A549 (cell line): ENCODE measurements at regions of chr2 and their contacts with region 1.

Region 1: GRCh38 chr2:84970868-84971509 is at the start of gene KCMF1:
- DNase-seq: peak in 1 of 2 experiments; percentile 89
- ATAC-seq: peak; percentile 75 to 77
- H3K4me3 ChIP-seq: peak within 1 kb of the TSS; percentile 89
- H3K27ac ChIP-seq: peak within 1 kb of the TSS; percentile 97 to 98
- H3K4me1 ChIP-seq: peaks cover 42% of the 10 kb centered on the region
- CTCF ChIP-seq: no peak
- EP300 ChIP-seq: no peak
- POLR2A ChIP-seq: peak; percentile 40
- RAD21 ChIP-seq: no peak
- polyA plus RNA-seq, gene KCMF1: 194 and 221 TPM in 2 replicates

Region 2: GRCh38 chr2:84905181-84906107 is 65.5 kb before region 1 on chr2 and contains the start of gene TMSB10:
- CTCF ChIA-PET with region 1: no interaction called
- POLR2A ChIA-PET with region 1: interaction called, 16 read pairs
- DNase-seq: peak; percentile 82 to 91
- ATAC-seq: peak; percentile 60 to 70
- H3K4me3 ChIP-seq: peak within 1 kb of the TSS; percentile 87
- H3K27ac ChIP-seq: peak within 1 kb of the TSS; percentile 89 to 97
- H3K4me1 ChIP-seq: peaks cover 16% of the 10 kb centered on the region
- CTCF ChIP-seq: peak; percentile 30; the same call in 1 of the 3 replicates
- EP300 ChIP-seq: 0 out of 5 replicates have a peak, but pooled peaks of 1 of the 2 experiments have one; percentile 26
- POLR2A ChIP-seq: peak; percentile 98
- RAD21 ChIP-seq: peak in 1 of 2 experiments; percentile 37; a peak in 1 of 5 replicates
- polyA plus RNA-seq, gene TMSB10: 2,292 and 3,109 TPM in 2 replicates

Region 3: GRCh38 chr2:84946204-84947009 is 24.6 kb before region 1 on chr2:
- CTCF ChIA-PET with region 1: interaction called, 18 read pairs
- POLR2A ChIA-PET with region 1: interaction called, 18 read pairs
- DNase-seq: peak; percentile 94 to 95
- ATAC-seq: peak; percentile 93 to 94
- H3K4me3 ChIP-seq: no peak overlapping the region
- H3K27ac ChIP-seq: peak overlapping the region; percentile 84 to 88
- H3K4me1 ChIP-seq: peaks cover 26% of the 10 kb centered on the region
- CTCF ChIP-seq: no peak
- EP300 ChIP-seq: no peak
- POLR2A ChIP-seq: peak; percentile 27
- RAD21 ChIP-seq: peak in 1 of 2 experiments; percentile 1; a peak in 1 of 5 replicates

Region 4: GRCh38 chr2:84958135-84959044 is 12.6 kb before region 1 on chr2:
- CTCF ChIA-PET with region 1: interaction called, 20 read pairs
- POLR2A ChIA-PET with region 1: interaction called, 70 read pairs
- DNase-seq: peak; percentile 96 to 98
- ATAC-seq: peak; percentile 91 to 92
- H3K4me3 ChIP-seq: peak overlapping the region; percentile 21; the same call in 1 of the 3 replicates
- H3K27ac ChIP-seq: peak overlapping the region; percentile 90
- H3K4me1 ChIP-seq: peaks cover 65% of the 10 kb centered on the region
- CTCF ChIP-seq: no peak
- EP300 ChIP-seq: peak; percentile 22 to 82; a peak in 1 of 5 replicates
- POLR2A ChIP-seq: no peak
- RAD21 ChIP-seq: peak in 1 of 2 experiments; percentile 22; a peak in 4 of 5 replicates

Region 5: GRCh38 chr2:85017411-85018048 is 46.5 kb after region 1 on chr2:
- CTCF ChIA-PET with region 1: interaction called, 27 read pairs
- POLR2A ChIA-PET with region 1: interaction called, 7 read pairs
- DNase-seq: no peak
- ATAC-seq: no peak
- H3K4me3 ChIP-seq: no peak overlapping the region
- H3K27ac ChIP-seq: peak overlapping the region; percentile 50 to 60; a peak in 4 of 6 replicates
- H3K4me1 ChIP-seq: peaks cover 69% of the 10 kb centered on the region
- CTCF ChIP-seq: peak; percentile 65
- EP300 ChIP-seq: no peak
- POLR2A ChIP-seq: no peak
- RAD21 ChIP-seq: peak; percentile 27 to 37; a peak in 2 of 5 replicates